Heart right ventricle (tissue), 16 donors: ENCODE measurements at regions of chr17 and their contacts with region 1.

Region 1: DNA sequence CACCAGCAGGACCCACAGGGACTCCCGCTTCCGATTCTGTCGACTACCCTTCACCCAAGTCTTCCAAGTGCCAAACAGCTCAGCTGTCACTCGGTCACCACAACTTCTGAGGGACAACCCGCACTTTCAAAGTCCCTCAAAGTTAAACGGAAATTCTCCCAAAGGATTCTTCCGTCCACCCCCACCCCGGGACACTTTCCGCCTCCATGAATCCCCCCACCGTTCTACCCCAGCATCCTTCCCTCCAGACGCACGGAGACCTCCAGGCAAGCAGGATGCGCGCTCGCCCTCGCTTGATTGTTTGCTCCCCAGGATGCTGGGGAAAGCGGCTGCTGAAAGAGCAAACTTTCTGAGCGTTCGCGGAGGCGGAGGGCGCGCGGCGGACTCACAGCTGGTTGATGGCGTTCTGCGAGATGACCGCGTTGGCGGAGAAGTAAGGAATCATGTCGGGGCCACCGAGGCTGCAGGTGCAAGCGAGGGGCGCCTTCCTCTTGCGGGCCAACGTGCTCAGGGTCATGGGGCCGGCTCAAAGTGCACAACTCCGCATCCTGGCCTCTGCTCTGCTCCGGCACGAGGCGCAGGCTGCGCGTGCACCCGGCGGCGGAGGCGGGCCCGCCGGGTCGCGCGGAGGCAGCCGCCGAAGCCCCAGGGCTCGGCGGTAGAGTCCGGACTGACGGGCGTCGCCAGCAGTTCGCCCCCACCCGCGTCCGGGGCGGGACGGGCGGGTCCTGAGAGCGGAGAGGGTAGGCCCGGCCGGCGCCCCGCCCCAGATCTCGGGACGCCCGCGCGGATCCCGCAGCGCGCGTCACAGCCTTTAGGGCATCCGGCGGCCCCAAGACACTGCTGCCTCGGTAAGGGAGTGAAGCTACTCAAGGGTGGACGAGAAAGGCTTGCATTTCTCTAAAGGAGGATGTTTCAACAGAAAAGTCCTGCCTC is 138.3 kb upstream of the CORO6 start:
- DNase-seq: peak; percentile 91 to 94
- ATAC-seq: peak; percentile 96 to 99 (median 98)
- H3K4me3 ChIP-seq: peak overlapping the region; percentile 69 to 97 (median 86)
- H3K27ac ChIP-seq: peak overlapping the region; percentile 86 to 96 (median 92)
- H3K4me1 ChIP-seq: peaks cover 3 to 40% (median 19%) of the 10 kb centered on the region in 9 donors
- H3K27me3 ChIP-seq: no peaks in the 10 kb centered on the region
- CTCF ChIP-seq: peak in 2 of 9 donors; percentile 4 to 11

Region 2: GRCh38 chr17:29640413-29640812 is 120.6 kb before region 1 on chr17:
- intact Hi-C with region 1: loop called in 7 of 10 experiments (anchors 2 to 5 kb)
- DNase-seq: peak in 1 of 2 donors; percentile 23
- ATAC-seq: peak in 6 of 8 donors; percentile 21 to 48 (median 38)
- H3K4me3 ChIP-seq: peak overlapping the region in 1 of 10 donors; percentile 9
- H3K27ac ChIP-seq: peak overlapping the region; percentile 37 to 86 (median 74)
- H3K4me1 ChIP-seq: peaks cover 36 to 70% (median 66%) of the 10 kb centered on the region in 9 donors
- H3K27me3 ChIP-seq: no peaks in the 10 kb centered on the region
- CTCF ChIP-seq: no peak

Region 3: GRCh38 chr17:29722411-29723198 is 38.4 kb before region 1 on chr17:
- intact Hi-C with region 1: loop called in 1 of 10 experiments (anchors 5 kb)
- DNase-seq: peak in 1 of 2 donors; percentile 78
- ATAC-seq: peak; percentile 82 to 95 (median 90)
- H3K4me3 ChIP-seq: peak overlapping the region in 8 of 10 donors; percentile 2 to 43 (median 25)
- H3K27ac ChIP-seq: peak overlapping the region; percentile 44 to 94 (median 81)
- H3K4me1 ChIP-seq: peaks cover 7 to 96% (median 56%) of the 10 kb centered on the region in 9 donors
- H3K27me3 ChIP-seq: no peaks in the 10 kb centered on the region
- CTCF ChIP-seq: no peak

Region 4: DNA sequence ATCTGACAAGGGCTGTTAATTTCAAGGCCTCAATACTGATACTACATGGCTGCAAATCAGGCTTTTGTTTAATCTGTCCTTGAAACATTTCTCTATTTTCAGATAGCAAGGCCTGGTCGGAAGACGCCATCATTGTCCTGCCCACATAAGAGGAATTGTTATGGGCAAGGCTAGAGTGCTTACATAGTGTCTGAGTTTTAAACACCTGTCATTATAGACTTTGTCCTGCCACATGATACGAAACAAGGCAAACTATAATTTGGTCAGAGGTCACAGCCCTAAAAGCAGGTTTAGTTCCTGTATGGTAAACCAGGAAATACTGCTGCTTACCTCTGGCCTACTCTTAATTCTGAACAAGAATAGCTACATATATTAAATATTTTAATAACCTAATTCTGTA is 64.6 kb after region 1 on chr17:
- intact Hi-C with region 1: no loop called
- DNase-seq: no peak
- ATAC-seq: no peak
- H3K4me3 ChIP-seq: no peak overlapping the region
- H3K27ac ChIP-seq: no peak overlapping the region
- H3K4me1 ChIP-seq: no peaks in the 10 kb centered on the region
- H3K27me3 ChIP-seq: no peaks in the 10 kb centered on the region
- CTCF ChIP-seq: no peak